CD4-positive, alpha-beta memory T cell (primary cell): ENCODE measurements at regions of chr18 and their contacts with region 1.

Region 1: DNA sequence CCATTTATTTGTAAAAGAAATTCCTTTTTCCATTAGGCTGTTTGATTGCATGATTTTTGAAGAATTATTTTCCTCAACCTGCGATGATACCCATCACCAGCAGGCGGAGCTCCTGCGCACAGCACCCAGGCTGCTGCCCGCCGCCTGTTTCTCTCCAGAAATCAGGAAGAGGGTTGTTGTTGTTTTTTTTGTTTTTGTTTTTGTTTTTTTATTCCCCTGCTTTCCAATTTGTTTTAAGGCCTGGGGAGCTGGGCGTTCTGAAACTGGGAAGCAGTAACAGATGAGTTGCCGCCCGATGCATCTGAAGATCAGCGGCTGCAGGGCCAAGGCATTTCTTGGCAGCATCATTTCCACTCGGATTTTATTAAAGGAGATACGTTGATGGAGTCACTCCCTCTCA is 132.1 kb downstream of the MBP start:
- DNase-seq: peak in 4 of 5 donors; percentile 42 to 55 (median 44)
- H3K4me3 ChIP-seq: no peak overlapping the region
- H3K4me3 Mint-ChIP-seq: peak overlapping the region in 1 of 8 donors; percentile 0
- H3K27ac ChIP-seq: no peak overlapping the region
- H3K27ac Mint-ChIP-seq: peak overlapping the region in 4 of 7 donors; percentile 16 to 61 (median 32)
- H3K4me1 ChIP-seq: peaks cover 12% of the 10 kb centered on the region
- H3K4me1 Mint-ChIP-seq: peaks cover 14 to 31% (median 18%) of the 10 kb centered on the region in 4 donors
- H3K27me3 ChIP-seq: no peaks in the 10 kb centered on the region
- H3K27me3 Mint-ChIP-seq: no peaks in the 10 kb centered on the region

Region 2: DNA sequence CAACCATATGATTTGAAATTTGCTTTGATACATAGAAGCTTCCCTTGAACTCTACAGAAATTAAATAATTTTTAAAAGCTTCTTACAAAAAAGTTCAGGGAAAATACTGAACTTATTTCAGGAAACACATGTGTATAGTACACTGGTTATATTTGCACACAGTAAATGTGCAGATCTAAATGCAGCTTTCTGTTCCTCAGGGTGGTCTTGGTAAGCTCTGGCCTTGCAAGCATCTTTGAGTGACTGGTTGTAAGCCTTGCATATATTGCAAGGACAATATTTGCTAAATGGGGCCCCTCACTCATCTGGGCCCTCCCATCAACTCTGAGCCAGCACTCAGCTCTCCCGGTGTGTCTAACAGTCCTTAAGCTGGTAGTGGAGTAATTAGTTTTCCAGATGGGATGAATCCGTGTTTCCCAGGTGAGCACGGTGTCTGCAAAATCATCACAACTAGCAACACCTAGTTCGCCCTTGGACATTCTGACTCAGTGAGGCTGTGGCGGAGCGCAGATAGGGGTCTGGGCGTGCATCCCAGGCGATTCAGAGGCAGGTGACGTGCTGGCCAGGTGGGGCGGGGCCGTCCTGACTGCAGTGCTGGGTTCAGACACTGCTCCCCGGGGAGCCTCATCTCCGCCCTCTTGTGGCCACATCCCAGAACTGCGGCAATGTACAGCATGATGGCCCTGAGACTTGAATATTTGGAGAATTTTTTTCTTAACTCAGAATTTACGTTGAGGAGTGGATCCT is 17.5 kb before region 1 on chr18:
- CTCF ChIA-PET with region 1: interaction called, 47 read pairs
- POLR2A ChIA-PET with region 1: no interaction called
- intact Hi-C with region 1: no loop called
- DNase-seq: peak; percentile 77 to 84 (median 79)
- H3K4me3 ChIP-seq: peak overlapping the region in 1 of 2 donors; percentile 14
- H3K4me3 Mint-ChIP-seq: peak overlapping the region in 3 of 8 donors; percentile 14 to 34 (median 15)
- H3K27ac ChIP-seq: no peak overlapping the region
- H3K27ac Mint-ChIP-seq: peak overlapping the region in 4 of 7 donors; percentile 7 to 76 (median 21)
- H3K4me1 ChIP-seq: peaks cover 6% of the 10 kb centered on the region
- H3K4me1 Mint-ChIP-seq: peaks cover 4 to 9% (median 6%) of the 10 kb centered on the region in 4 donors
- H3K27me3 ChIP-seq: no peaks in the 10 kb centered on the region
- H3K27me3 Mint-ChIP-seq: no peaks in the 10 kb centered on the region

Region 3: DNA sequence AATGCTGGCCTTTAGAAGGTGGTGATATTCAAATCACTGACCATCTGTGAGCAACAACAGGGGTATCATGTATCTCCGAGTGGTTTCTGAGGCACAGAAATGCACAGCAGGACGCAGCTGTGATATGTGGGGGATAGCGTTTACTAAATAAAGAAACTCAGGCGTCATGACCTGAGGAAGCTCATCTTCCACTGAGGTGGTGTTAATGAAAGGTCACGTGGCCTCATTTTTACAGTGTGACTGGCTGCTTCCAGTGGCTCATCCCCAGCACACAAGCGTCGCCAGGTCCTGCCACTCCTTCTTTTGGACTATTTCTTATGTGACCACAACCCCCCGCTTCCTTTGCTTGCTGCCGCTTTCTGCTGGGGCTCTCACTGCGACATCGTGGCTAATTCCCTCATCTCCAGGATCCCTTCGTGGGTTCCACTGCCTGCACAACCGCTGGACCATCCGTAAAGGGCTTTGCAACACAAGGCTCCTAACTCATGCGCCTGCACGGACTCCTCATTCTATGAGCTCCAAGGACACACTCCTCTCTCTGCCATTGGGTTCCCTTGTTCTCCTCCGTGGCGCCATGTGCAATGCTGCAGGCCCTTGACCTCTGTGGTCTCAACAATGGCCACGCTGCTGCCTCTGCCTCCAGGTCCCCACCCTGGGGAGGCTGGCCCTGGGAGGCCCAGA is 22.7 kb after region 1 on chr18:
- CTCF ChIA-PET with region 1: interaction called, 11 read pairs
- POLR2A ChIA-PET with region 1: interaction called, 6 read pairs
- intact Hi-C with region 1: no loop called
- DNase-seq: no peak
- H3K4me3 ChIP-seq: no peak overlapping the region
- H3K4me3 Mint-ChIP-seq: no peak overlapping the region
- H3K27ac ChIP-seq: no peak overlapping the region
- H3K27ac Mint-ChIP-seq: peak overlapping the region in 5 of 7 donors; percentile 13 to 71 (median 47)
- H3K4me1 ChIP-seq: no peaks in the 10 kb centered on the region
- H3K4me1 Mint-ChIP-seq: peaks cover 18 to 45% (median 27%) of the 10 kb centered on the region in 4 donors
- H3K27me3 ChIP-seq: no peaks in the 10 kb centered on the region
- H3K27me3 Mint-ChIP-seq: no peaks in the 10 kb centered on the region

Region 4: GRCh38 chr18:77061946-77062517 is 61.5 kb after region 1 on chr18:
- CTCF ChIA-PET with region 1: interaction called, 141 read pairs
- POLR2A ChIA-PET with region 1: interaction called, 12 read pairs
- intact Hi-C with region 1: loop called (anchors 2 kb)
- DNase-seq: peak in 1 of 5 donors; percentile 62
- H3K4me3 ChIP-seq: peak overlapping the region in 1 of 2 donors; percentile 8
- H3K4me3 Mint-ChIP-seq: peak overlapping the region; percentile 61 to 92 (median 81)
- H3K27ac ChIP-seq: peak overlapping the region; percentile 77
- H3K27ac Mint-ChIP-seq: peak overlapping the region; percentile 97 to 100 (median 99)
- H3K4me1 ChIP-seq: peaks cover 95% of the 10 kb centered on the region
- H3K4me1 Mint-ChIP-seq: peaks cover 72 to 89% (median 82%) of the 10 kb centered on the region in 4 donors
- H3K27me3 ChIP-seq: no peaks in the 10 kb centered on the region
- H3K27me3 Mint-ChIP-seq: no peaks in the 10 kb centered on the region

Region 5: DNA sequence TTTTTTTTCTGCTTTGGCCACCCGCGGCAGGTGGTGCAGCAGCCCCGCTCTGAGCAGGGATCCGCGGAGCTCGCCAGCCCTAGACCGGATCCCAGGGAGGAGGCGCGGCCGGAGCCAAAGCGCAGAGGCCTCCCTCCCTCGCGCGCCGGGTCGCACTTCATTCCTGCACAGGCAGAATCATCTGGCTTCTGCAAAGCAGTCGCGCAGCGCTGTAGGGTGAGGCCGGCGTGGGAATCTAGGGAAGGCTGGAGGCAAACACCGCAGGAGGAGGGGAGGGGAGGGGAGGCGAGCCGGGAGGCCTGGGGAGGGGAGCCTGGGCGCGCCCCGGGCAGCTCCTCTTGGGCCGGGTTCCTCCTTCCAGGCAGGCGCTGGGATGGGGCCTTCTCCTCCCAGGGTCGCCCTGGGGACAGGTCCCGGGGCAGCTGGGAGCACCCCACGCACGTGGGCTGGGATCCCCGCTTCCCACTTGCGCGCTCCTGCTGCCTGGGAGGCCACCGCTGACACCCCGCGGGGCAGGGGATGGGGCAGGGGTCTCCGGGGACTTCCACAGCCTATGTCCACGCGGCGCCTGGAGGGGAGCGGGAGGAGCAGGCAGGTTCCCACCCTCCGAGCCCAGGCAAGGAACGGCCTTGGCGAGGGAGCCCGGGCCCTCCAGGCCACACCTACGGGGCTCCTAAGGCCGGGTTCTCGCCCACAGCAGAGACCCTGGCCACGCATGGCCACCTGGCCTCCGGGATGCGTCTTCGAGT is 87.0 kb after region 1 on chr18:
- CTCF ChIA-PET with region 1: no interaction called
- POLR2A ChIA-PET with region 1: no interaction called
- intact Hi-C with region 1: no loop called
- DNase-seq: no peak
- H3K4me3 ChIP-seq: no peak overlapping the region
- H3K4me3 Mint-ChIP-seq: no peak overlapping the region
- H3K27ac ChIP-seq: no peak overlapping the region
- H3K27ac Mint-ChIP-seq: no peak overlapping the region
- H3K4me1 ChIP-seq: peaks cover 78% of the 10 kb centered on the region
- H3K4me1 Mint-ChIP-seq: peaks cover 59 to 85% (median 69%) of the 10 kb centered on the region in 4 donors
- H3K27me3 ChIP-seq: no peaks in the 10 kb centered on the region
- H3K27me3 Mint-ChIP-seq: no peaks in the 10 kb centered on the region

Region 6: GRCh38 chr18:77132371-77133050 is 132.0 kb after region 1 on chr18 and contains the start of gene MBP:
- CTCF ChIA-PET with region 1: interaction called, 8 read pairs
- POLR2A ChIA-PET with region 1: interaction called, 3 read pairs
- intact Hi-C with region 1: loop called (anchors 2 kb)
- DNase-seq: peak; percentile 58 to 75 (median 70)
- H3K4me3 ChIP-seq: peak within 1 kb of the TSS; percentile 81 to 82
- H3K4me3 Mint-ChIP-seq: peak within 1 kb of the TSS; percentile 98 to 100 (median 98)
- H3K27ac ChIP-seq: peak within 1 kb of the TSS; percentile 85
- H3K27ac Mint-ChIP-seq: peak within 1 kb of the TSS; percentile 94 to 99 (median 97)
- H3K4me1 ChIP-seq: peaks cover 54% of the 10 kb centered on the region
- H3K4me1 Mint-ChIP-seq: peaks cover 38 to 66% (median 50%) of the 10 kb centered on the region in 4 donors
- H3K27me3 ChIP-seq: no peaks in the 10 kb centered on the region
- H3K27me3 Mint-ChIP-seq: no peaks in the 10 kb centered on the region
- total RNA-seq, gene MBP: 179 to 187 TPM

Region 7: DNA sequence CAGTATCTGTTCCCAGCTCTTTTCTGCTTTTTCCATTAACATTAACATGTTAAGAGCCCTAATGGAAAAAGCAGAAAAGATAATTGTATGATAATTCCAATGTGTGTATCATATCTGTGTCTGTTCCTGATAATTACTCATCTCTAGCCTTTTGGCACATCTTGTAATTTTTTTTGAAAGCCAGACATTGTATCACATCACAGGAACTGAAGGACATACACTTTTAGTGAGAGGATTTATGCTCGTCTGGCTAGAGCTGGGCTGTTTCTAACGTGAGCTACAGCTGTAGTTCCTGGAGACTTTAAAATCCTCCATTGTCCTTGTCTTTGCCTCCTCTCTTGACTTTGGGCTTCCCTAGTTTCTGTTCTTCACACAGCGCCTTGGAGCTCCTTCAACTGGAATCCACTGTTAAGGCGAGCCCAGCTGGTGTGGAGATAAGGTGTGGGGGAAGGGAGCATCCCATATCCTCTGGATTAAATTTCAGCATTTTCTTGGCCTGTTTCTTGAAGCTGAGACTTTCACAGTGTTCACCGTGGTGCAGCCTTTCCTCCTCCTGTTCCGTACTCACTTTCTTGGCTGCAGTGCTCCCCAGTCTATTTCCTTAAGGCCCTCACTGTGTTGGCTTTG is 460.6 kb after region 1 on chr18:
- CTCF ChIA-PET with region 1: no interaction called
- POLR2A ChIA-PET with region 1: no interaction called
- intact Hi-C with region 1: loop called (anchors 10 kb)
- DNase-seq: no peak
- H3K4me3 ChIP-seq: no peak overlapping the region
- H3K4me3 Mint-ChIP-seq: no peak overlapping the region
- H3K27ac ChIP-seq: no peak overlapping the region
- H3K27ac Mint-ChIP-seq: no peak overlapping the region
- H3K4me1 ChIP-seq: no peaks in the 10 kb centered on the region
- H3K4me1 Mint-ChIP-seq: no peaks in the 10 kb centered on the region
- H3K27me3 ChIP-seq: peaks cover 4% of the 10 kb centered on the region
- H3K27me3 Mint-ChIP-seq: peaks cover 2 to 32% of the 10 kb centered on the region in 2 donors

Region 8: GRCh38 chr18:77522051-77522675 is 521.6 kb after region 1 on chr18:
- CTCF ChIA-PET with region 1: no interaction called
- POLR2A ChIA-PET with region 1: no interaction called
- intact Hi-C with region 1: no loop called
- DNase-seq: no peak
- H3K4me3 ChIP-seq: no peak overlapping the region
- H3K4me3 Mint-ChIP-seq: no peak overlapping the region
- H3K27ac ChIP-seq: no peak overlapping the region
- H3K27ac Mint-ChIP-seq: no peak overlapping the region
- H3K4me1 ChIP-seq: no peaks in the 10 kb centered on the region
- H3K4me1 Mint-ChIP-seq: no peaks in the 10 kb centered on the region
- H3K27me3 ChIP-seq: no peaks in the 10 kb centered on the region
- H3K27me3 Mint-ChIP-seq: peaks cover 0 to 1% of the 10 kb centered on the region in 2 donors